Posterior vena cava (tissue), 2 donors: ENCODE measurements at regions of chr15 and their contacts with region 1.

Region 1: DNA sequence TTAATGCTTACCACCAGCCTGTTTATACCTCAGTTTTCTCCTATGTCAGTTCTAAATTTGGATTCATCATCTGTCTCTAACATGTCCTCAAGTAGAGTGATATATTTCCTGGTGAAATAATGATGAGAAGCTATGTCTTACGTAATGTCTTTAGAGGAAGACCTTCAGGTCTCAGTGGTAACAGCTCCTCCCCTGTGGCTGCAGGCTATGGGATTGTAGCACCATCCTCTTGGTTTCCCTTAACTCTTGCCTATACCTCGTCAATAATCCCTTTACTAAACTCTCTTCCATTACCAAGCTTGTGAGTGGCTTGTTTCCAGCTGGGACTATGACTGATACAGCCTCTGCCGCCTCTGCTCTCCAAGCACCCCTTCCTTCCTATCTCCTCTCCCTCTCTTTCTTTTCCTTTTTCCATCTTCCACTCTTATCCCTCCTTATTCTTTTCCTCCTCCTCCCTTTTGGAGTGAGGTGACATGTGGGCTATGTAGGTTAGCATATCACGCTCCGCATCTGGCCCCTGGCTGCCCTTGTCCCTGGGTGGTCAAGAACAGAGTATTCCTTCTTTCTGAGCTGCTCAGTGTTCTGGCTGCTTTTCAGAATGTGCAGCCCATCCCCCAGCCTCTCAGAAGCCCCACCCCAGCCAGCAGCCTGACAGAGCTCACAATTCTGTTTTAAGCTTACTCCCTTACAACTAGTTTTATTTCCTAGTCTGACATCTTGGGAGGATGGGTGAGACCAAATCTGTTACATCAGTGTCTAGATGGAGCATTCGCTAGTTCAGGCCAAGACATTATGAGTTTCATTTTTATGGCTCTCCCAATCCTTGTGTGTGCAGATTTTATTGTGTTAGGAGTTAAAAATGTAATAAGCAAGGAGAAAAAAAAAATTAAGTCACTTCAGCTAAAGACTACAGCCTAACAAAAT is 75.0 kb upstream of the RNU6-1 start:
- DNase-seq: peak; percentile 85

Region 2: DNA sequence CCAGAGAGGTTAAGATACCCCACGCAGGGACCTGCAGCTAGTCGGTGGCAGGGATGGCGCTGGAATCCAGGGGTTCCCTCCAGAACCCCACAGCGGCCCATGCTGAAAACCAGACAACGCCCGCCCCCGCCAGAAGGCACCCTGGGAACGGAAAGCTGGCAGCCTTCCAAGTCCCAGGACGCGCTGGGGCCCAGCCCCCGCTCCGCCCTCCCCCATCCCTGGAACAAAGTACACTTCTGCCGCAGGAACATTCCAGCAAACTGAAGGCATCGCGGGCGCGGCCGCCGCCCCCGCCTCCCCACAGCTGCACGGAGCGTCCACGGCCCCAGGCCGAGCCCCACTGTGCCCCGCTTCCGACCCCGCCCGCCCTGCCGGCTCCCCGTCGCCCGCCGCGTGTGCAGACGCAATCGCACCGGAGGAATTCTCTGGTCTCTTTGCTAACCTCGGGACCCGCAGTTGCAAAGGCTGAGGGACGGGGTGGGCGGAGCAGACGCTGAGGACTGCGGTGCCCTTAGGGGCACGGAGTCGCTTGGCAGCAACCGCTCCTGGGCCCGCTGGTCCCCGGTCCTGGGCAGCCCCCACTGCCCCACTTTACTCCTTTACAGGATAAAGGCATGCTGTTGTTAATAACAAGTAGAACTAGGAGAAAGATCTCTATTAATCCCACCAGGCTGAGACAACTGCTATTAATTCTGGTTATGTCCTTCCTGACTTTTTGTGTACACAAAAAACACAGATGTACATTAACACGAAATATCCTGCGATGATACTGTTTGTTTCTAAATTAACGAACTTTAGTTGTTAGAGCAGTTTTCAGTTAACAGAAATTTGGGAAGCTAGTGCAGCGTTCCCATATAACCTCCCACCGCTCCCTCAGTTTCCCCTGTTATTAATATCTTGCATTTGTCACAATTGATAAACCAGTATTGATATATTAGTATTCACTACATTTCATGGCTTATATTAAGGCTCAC is 30.0 kb before region 1 on chr15:
- intact Hi-C with region 1: loop called in 1 of 2 experiments (anchors 5 kb)
- DNase-seq: peak; percentile 94

Region 3: DNA sequence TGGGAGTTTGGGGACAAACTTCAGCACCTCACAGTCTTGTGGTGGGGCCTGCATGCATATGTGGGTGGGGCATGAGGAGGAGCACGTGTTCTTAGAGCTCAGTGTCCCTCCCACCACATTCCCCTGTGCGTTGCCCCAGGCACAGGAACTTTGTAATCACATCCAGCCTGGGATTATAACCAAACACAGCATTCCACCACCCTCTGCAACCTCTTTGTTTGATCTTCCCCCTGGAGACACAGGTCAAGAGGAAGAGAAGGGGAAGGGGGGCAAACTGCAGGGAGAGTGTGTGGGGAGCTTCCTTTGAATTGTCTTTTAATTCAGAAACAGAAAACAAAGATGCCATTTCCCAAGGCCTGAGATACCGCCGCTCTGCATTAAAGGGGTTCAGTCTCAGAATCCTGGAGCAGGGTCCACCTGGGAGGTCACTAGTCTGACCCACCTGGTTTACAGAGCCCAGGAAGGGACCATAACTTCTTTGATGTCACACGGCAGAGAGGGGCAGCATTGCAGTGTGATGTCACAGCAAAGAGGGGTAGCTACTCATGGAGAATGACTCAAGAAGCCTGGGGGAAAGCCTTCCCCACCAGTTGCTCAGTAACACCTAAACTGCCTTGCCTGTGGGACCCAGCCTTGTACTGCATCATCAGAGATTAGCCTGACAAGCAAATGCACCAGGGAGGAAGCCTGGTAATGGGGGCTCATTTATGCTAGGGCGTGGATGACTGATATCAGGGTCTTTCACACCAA is 31.3 kb after region 1 on chr15:
- intact Hi-C with region 1: no loop called
- DNase-seq: no peak

Region 4: GRCh38 chr15:69535101-69535638 is 1620.4 kb after region 1 on chr15:
- intact Hi-C with region 1: no loop called
- DNase-seq: peak; percentile 32